Activated T-helper 1 cell treated with anti-CD3 and anti-CD28 coated beads, Interleukin-12 subunit alpha, Interleukin-12 subunit beta, Interleukin-2, Interleukin-4 antibody, amounts not matched to agents 30 ng/mL and 10 ng/mL and 1 ng/mL, durations not matched to agents 14 hours and 24 hours and 36 hours (primary cell): ENCODE measurements at regions of chr3 and their contacts with region 1.

Region 1: GRCh38 chr3:150495563-150496168 is 50.6 kb downstream of the SERP1 start:
- DNase-seq: no peak
- H3K4me3 Mint-ChIP-seq: no peak overlapping the region
- H3K27ac Mint-ChIP-seq: no peak overlapping the region
- H3K4me1 Mint-ChIP-seq: no peaks in the 10 kb centered on the region
- H3K27me3 Mint-ChIP-seq: peaks cover 5% of the 10 kb centered on the region

Region 2: DNA sequence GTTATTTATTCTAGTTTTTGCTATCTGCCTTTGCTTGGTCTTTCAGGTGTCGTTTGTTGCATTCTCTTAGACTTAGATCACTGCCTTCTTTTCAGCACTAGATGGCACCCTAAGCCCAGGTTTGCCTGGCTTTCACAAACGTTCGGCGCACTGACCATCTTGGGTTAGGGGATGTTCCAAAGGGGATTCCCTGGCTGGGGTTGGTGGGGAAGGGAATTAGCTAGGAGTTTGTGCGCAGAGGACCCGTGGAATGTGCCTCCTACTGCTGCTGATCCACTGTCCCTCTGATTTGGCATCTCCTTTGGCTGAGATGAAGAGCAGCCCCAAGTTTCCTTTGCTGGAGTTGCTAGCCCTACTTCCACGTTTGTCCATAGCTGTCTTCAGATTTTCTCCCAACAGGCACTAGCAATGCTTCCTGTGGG is 558.8 kb before region 1 on chr3:
- intact Hi-C with region 1: loop called (anchors 10 kb)
- DNase-seq: no peak
- H3K4me3 Mint-ChIP-seq: no peak overlapping the region
- H3K27ac Mint-ChIP-seq: no peak overlapping the region
- H3K4me1 Mint-ChIP-seq: peaks cover 7% of the 10 kb centered on the region
- H3K27me3 Mint-ChIP-seq: no peaks in the 10 kb centered on the region

Region 3: GRCh38 chr3:149969940-149970715 is 525.5 kb before region 1 on chr3:
- intact Hi-C with region 1: loop called (anchors 1 kb)
- DNase-seq: peak; percentile 56
- H3K4me3 Mint-ChIP-seq: peak overlapping the region; percentile 80
- H3K27ac Mint-ChIP-seq: no peak overlapping the region
- H3K4me1 Mint-ChIP-seq: peaks cover 12% of the 10 kb centered on the region
- H3K27me3 Mint-ChIP-seq: peaks cover 54% of the 10 kb centered on the region

Region 4: DNA sequence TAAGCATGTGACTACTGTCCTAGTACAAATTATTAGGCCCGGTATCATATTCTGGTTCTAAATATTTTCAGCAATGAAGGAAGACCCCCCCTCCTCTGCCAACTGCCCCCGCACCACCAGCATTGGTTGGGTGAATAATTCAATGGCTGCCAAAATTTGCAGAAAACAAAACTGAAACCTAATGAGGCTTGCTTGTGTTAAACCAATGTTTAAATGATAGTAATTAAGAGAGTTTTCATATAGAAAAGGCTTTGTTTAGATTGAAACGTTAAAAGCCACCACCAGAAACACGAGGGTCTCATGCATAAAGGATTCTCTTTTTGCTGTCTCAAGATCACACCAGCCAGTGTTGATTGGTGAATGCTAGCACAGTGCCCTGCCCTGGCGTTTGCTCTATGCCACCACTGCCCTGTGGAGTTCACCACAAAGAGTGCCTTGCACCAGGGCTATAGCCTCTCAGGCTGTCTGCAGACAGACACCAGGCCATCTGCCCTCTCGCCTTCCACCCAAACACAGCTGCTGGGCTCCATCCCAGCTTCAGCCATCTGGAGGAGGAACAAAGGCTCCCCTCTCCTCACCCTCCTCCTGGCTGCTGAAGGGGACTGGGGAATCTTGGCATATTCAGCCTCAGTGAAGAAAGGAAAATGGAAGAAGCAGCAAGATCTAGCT is 324.7 kb before region 1 on chr3:
- intact Hi-C with region 1: no loop called
- DNase-seq: no peak
- H3K4me3 Mint-ChIP-seq: no peak overlapping the region
- H3K27ac Mint-ChIP-seq: no peak overlapping the region
- H3K4me1 Mint-ChIP-seq: no peaks in the 10 kb centered on the region
- H3K27me3 Mint-ChIP-seq: no peaks in the 10 kb centered on the region

Region 5: GRCh38 chr3:150227839-150228238 is 267.8 kb before region 1 on chr3:
- intact Hi-C with region 1: loop called (anchors 1 kb)
- DNase-seq: no peak
- H3K4me3 Mint-ChIP-seq: no peak overlapping the region
- H3K27ac Mint-ChIP-seq: no peak overlapping the region
- H3K4me1 Mint-ChIP-seq: no peaks in the 10 kb centered on the region
- H3K27me3 Mint-ChIP-seq: peaks cover 12% of the 10 kb centered on the region

Region 6: GRCh38 chr3:150286390-150287147 is 209.1 kb before region 1 on chr3:
- intact Hi-C with region 1: loop called (anchors 1 kb)
- DNase-seq: no peak
- H3K4me3 Mint-ChIP-seq: no peak overlapping the region
- H3K27ac Mint-ChIP-seq: no peak overlapping the region
- H3K4me1 Mint-ChIP-seq: no peaks in the 10 kb centered on the region
- H3K27me3 Mint-ChIP-seq: peaks cover 32% of the 10 kb centered on the region

Region 7: DNA sequence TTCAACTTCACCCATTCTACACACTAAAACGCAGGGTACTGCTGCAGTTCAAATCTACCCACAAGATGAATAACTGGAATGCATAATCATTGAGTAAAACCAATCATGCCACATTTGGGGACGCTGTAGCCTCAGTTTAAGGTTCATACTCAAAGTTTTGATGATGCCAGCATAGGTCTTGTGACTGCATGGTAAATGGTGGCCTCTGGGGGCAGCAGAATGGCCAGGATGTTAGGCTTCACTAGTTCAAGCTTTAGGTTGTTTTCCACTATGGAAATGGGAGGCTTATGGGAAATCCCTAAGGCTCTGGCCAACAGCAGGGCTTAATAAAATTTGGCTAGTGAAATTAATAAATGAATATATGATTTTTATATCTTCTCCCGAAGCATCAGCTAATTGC is 191.9 kb before region 1 on chr3:
- intact Hi-C with region 1: loop called (anchors 5 kb)
- DNase-seq: no peak
- H3K4me3 Mint-ChIP-seq: no peak overlapping the region
- H3K27ac Mint-ChIP-seq: no peak overlapping the region
- H3K4me1 Mint-ChIP-seq: no peaks in the 10 kb centered on the region
- H3K27me3 Mint-ChIP-seq: peaks cover 22% of the 10 kb centered on the region

Region 8: GRCh38 chr3:150447609-150448465 is 47.8 kb before region 1 on chr3:
- intact Hi-C with region 1: no loop called
- DNase-seq: no peak
- H3K4me3 Mint-ChIP-seq: no peak overlapping the region
- H3K27ac Mint-ChIP-seq: no peak overlapping the region
- H3K4me1 Mint-ChIP-seq: peaks cover 15% of the 10 kb centered on the region
- H3K27me3 Mint-ChIP-seq: no peaks in the 10 kb centered on the region